ENCODE measurements at regions of chr10 and their contacts with region 1.

Region 1: DNA sequence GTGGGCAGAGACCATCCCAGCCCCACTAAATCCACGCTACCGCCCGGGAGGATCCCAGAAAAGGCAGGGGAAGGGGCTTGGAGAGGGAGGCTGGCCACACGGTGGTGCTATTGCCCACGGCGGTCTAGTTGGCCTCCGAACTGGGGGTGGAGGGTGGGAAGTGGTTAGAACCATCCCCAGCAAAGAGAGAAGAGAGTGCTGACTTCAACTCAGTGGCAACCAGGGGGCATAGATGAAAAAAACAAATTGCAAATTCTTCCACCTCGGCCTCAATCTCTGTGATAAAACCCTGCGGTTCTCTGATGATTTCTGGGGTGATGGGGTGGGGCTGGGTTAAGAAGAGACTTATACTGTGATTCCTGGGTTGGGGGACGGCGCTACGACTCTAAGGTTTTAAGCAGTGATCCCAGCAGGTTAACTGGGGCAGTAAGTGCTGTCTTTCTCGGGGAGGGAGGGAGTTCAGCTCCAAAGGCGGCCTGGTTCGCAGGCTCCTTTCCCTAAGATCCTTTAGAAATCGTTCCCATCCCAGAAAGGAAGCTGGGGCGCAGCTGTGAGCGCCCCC is 154.5 kb upstream of the LYZL2 start:
- DNase-seq: peak in 1 of 2 experiments; percentile 67
- H3K4me3 ChIP-seq: no peak overlapping the region
- H3K27ac ChIP-seq: no peak overlapping the region
- H3K4me1 ChIP-seq: no peaks in the 10 kb centered on the region
- H3K27me3 ChIP-seq: no peaks in the 10 kb centered on the region
- CTCF ChIP-seq: peak; percentile 73

Region 2: DNA sequence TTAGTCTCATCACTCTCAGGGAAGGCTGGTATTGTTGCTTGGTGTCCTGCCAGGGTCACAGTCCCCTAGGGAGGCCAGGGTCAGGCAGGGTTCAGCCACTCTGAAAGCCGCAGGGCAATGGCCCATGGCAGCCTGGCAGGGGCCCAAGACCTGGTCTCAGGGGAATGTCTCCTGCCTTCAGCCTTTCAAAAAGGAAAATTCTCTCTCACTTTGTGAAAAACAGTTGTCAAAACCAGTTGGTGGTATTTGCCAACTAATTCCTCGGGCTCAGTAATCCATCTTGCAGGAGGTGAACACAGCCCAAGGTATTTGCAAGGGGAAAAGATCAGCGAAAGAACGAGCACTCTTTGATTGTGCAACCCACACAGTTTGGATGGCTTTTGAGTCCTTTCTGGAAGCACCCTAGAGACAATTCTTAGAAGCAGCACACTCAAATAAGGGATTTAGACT is 826.1 kb before region 1 on chr10:
- CTCF ChIA-PET with region 1: no interaction called
- POLR2A ChIA-PET with region 1: no interaction called
- intact Hi-C with region 1: no loop called
- DNase-seq: peak; percentile 94 to 97
- H3K4me3 ChIP-seq: no peak overlapping the region
- H3K27ac ChIP-seq: peak overlapping the region; percentile 88
- H3K4me1 ChIP-seq: peaks cover 44% of the 10 kb centered on the region
- H3K27me3 ChIP-seq: no peaks in the 10 kb centered on the region
- CTCF ChIP-seq: no peak

Region 3: DNA sequence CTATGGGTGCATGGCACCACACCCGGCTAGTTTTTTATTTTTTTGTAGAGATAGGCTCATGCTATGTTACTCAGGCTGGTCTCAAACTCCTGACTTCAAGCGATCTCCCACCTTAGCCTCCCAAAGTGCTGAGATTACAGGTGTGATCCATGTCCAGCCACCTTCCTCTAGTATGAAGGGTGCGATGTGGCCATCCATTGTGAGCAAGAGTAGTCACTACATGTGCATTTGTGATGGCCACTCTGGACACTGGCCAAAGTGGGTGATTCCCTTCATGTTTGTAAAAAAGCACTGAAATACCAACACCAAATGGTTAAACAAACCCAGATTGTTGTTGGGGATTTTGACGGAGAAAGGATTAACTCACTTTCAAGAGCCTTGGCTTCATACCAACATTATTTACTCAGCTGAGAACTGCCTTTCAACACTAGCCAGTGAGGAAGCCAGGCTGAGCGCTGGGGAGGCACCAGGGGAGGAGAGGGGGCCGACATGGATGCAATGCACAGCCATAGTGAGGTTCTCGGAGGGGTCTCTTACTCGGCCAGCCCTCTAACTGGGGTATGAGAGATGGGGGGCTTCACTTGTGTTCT is 43.6 kb after region 1 on chr10:
- CTCF ChIA-PET with region 1: interaction called, 13 read pairs
- POLR2A ChIA-PET with region 1: no interaction called
- intact Hi-C with region 1: no loop called
- DNase-seq: no peak
- H3K4me3 ChIP-seq: no peak overlapping the region
- H3K27ac ChIP-seq: no peak overlapping the region
- H3K4me1 ChIP-seq: no peaks in the 10 kb centered on the region
- H3K27me3 ChIP-seq: no peaks in the 10 kb centered on the region
- CTCF ChIP-seq: no peak

Region 4: GRCh38 chr10:31204090-31204489 is 420.1 kb after region 1 on chr10:
- CTCF ChIA-PET with region 1: no interaction called
- POLR2A ChIA-PET with region 1: no interaction called
- intact Hi-C with region 1: no loop called
- DNase-seq: no peak
- H3K4me3 ChIP-seq: no peak overlapping the region
- H3K27ac ChIP-seq: no peak overlapping the region
- H3K4me1 ChIP-seq: no peaks in the 10 kb centered on the region
- H3K27me3 ChIP-seq: no peaks in the 10 kb centered on the region
- CTCF ChIP-seq: no peak

Region 5: DNA sequence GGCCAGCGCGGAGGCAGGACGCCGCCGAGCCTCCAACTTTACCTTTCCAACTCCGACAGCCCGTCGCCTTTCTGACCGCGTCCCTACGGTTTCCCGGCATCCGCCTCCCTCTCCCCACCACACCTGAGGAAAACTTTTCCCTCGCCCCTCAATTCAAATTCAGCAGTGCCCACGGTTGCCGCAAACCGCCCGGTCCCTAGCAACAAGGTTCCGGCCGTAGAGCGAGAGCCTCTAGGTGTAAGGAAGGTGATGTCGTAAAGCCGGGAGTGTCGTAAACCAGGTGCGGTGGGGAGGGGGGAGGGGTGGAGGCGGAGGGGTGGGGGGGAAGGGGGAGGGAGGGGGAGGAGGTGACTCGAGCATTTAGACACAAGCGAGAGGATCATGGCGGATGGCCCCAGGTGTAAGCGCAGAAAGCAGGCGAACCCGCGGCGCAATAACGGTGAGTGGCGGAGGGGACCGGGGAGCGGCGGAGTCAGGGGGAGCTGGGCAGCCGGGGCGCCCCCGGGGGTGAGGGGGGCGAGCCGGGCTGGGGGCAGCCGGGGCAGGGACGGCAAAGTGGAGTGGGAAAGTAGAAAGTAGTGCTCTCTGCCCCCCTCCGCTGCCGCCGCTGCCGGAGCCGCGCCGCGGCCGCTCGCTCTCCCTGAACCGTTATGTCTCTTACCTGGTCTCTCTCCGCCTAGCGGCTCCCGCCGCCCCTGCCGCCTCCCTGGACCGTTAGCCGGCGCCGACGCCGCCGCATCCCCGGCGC is 535.0 kb after region 1 on chr10 and contains the start of gene ZEB1:
- CTCF ChIA-PET with region 1: no interaction called
- POLR2A ChIA-PET with region 1: no interaction called
- intact Hi-C with region 1: loop called (anchors 1 kb)
- DNase-seq: peak; percentile 66 to 77
- H3K4me3 ChIP-seq: peak within 1 kb of the TSS; percentile 84
- H3K27ac ChIP-seq: peak within 1 kb of the TSS; percentile 65
- H3K4me1 ChIP-seq: no peaks in the 10 kb centered on the region; the same call in 1 of the 2 replicates
- H3K27me3 ChIP-seq: 0 out of 2 replicates have a peak, but pooled peaks cover 4% of the 10 kb centered on the region
- CTCF ChIP-seq: no peak
- total RNA-seq, gene ZEB1: 1.0 and 1.4 TPM in 2 replicates

Region 6: DNA sequence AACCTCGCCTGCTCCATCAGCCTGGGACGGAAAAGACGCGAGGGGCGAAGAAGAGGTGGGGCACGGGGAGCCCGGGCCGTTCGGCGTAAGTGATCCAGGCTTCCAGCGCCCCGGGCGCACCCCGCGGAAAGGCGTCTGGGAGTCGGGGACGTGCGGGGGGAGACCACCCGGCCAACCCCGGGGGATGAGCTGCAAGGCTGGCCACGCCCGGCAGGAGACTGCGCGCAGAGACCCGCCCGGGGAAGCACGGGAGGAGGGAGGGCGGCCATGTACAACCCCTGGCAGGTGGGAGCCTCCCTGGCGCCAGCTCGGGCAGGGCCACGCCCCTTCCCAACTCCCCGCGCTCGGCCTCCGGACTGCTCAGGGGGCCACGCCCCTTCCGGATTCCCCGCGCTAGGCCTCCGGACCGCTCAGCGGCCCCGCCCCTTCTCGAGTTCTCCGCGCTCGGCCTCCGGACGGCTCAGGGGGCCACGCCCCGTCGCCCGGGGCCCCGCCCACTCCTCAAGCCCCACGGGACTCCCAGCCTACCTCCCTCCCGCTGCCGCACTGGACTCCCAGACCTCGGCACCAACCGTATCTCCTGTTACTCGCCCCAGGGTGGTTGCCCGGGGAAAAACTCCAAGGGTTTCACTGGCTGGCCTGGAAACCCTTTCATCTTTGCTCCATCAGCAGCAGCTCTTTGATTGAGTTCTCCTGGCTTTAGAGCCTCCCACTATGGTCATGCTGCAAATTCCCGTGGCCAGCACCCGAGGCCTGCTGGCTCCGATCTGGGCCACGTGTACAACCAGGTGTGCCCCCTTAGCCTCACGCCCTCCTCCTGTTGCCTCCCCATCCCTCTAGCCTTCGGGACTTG is 819.4 kb after region 1 on chr10:
- CTCF ChIA-PET with region 1: no interaction called
- POLR2A ChIA-PET with region 1: no interaction called
- intact Hi-C with region 1: loop called (anchors 10 kb)
- DNase-seq: peak; percentile 77 to 97
- H3K4me3 ChIP-seq: peak overlapping the region; percentile 66
- H3K27ac ChIP-seq: no peak overlapping the region
- H3K4me1 ChIP-seq: no peaks in the 10 kb centered on the region
- H3K27me3 ChIP-seq: no peaks in the 10 kb centered on the region
- CTCF ChIP-seq: no peak

Region 7: GRCh38 chr10:32095116-32095733 is 1311.2 kb after region 1 on chr10:
- CTCF ChIA-PET with region 1: no interaction called
- POLR2A ChIA-PET with region 1: no interaction called
- intact Hi-C with region 1: no loop called
- DNase-seq: peak; percentile 25 to 60
- H3K4me3 ChIP-seq: no peak overlapping the region
- H3K27ac ChIP-seq: no peak overlapping the region
- H3K4me1 ChIP-seq: peaks cover 7% of the 10 kb centered on the region
- H3K27me3 ChIP-seq: no peaks in the 10 kb centered on the region
- CTCF ChIP-seq: no peak

Measured in PC-9 (cell line).